Posterior vena cava (tissue), 2 donors: ENCODE measurements at regions of chr13 and their contacts with region 1.

Region 1: DNA sequence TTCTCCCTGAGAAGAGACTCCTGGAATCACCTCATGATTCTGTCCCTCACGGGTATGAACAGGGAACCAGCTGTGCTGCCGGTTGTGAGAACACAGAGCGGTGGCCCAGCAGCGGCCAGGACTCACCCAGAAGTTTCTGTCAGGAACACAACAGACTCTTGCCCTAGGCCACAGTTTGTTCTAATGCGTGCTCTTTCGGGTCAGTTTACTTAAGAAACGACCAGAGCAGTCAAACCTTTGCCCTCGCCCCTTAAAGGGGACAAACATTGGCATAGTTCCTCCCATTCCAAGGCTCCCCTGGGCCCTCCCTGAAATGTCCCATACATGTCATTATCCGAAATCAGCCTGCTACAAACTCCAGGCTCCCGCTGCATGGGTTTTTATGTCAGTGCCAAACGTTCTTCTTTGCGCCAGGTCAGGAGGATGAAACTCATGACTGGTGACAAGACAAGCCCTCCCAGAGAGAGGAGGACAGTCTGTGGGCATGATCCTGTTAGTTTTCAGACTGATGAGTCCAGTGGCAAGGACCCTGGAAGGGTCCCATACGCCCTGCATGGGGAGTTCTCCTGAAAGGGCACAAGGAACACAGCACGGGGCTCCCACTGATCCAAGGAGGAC is 18.3 kb downstream of the ZIC5 start:
- DNase-seq: peak; percentile 32

Region 2: GRCh38 chr13:99911069-99911964 is 41.9 kb before region 1 on chr13:
- intact Hi-C with region 1: loop called in 1 of 2 experiments (anchors 1 kb)
- DNase-seq: no peak

Region 3: GRCh38 chr13:100608906-100609305 is 655.7 kb after region 1 on chr13:
- intact Hi-C with region 1: no loop called
- DNase-seq: no peak